A673 (cell line): ENCODE measurements at regions of chr11 and their contacts with region 1.

Region 1: GRCh38 chr11:100876815-100877520 is 189.9 kb downstream of the ARHGAP42 start:
- DNase-seq: peak; percentile 88
- H3K4me3 ChIP-seq: no peak overlapping the region
- H3K27ac ChIP-seq: peak overlapping the region; percentile 35
- H3K4me1 ChIP-seq: peaks cover 24% of the 10 kb centered on the region
- H3K27me3 ChIP-seq: no peaks in the 10 kb centered on the region
- CTCF ChIP-seq: no peak

Region 2: DNA sequence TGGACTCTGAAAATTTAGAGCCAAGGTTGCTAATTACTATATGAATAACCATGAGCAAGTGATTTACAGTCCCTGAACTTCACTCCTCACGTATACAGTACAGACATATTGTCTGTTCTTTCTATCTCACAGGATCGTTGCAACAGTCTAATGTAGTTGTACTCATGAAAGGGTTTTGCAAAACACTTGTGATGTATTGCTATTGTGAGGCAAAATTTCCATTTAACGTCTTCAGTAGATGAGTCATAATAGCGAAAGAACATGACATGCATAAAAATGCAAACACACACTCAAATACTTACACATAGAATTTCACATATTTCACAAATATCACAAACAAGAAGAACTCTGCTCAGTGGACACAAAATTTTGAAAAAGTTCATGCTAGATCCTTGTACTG is 841.4 kb after region 1 on chr11:
- CTCF ChIA-PET with region 1: no interaction called
- POLR2A ChIA-PET with region 1: interaction called, 10 read pairs
- intact Hi-C with region 1: no loop called
- DNase-seq: peak; percentile 14
- H3K4me3 ChIP-seq: no peak overlapping the region
- H3K27ac ChIP-seq: no peak overlapping the region
- H3K4me1 ChIP-seq: no peaks in the 10 kb centered on the region
- H3K27me3 ChIP-seq: no peaks in the 10 kb centered on the region
- CTCF ChIP-seq: no peak